Activated naive CD8-positive, alpha-beta T cell treated with anti-CD3 and anti-CD28 coated beads, Interleukin-2, amount 10 ng/mL, durations not matched to agents 7 days and 5 days (primary cell): ENCODE measurements at regions of chr4 and their contacts with region 1.

Region 1: DNA sequence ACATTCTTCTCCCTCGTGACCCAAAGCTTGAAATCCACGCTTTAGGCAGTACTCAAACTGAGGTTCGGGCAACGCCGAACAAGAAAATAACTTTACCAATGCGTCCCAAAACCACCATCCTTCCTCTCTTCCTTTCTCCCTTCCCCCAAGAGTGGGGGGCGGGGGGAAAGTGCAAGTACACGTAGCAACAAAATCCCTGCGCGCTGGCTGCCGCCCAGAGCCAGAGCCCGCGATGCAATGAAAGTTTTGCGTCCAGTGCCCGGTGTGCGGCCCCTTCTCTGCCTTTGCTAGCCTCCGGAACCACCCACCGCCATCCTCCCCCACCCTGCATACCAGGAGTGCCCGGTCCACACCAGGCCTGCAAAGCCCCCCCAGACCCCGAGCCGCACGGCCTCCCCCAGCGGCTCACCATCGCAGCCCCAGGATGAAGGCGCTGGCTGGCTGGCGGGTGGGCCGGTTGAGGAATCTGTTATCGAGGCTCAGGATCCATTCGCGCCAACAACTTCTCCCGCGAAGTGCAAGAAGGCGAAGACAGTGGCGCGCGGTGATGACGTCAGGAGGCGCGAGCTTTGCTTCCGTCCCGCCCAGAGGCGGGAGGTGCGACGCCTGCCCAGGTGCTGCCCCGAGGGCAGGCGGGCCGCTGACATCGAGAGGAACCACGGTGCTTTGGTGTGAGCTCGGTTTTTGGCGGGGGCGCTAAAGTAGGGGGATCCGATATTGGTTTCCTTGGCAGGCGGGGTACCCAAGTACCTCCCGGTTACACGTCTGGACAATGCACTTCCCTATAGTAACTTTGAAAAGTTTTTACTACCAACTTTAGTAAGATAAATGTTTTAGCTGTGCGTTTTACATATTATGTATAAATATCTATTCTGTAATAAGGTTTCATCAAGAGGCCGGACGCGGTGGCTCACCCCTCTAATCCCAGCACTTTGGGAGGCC is at the start of gene RFC1:
- DNase-seq: peak; percentile 97
- ATAC-seq: peak; percentile 90
- H3K4me3 Mint-ChIP-seq: peak within 1 kb of the TSS; percentile 92
- H3K27ac Mint-ChIP-seq: peak within 1 kb of the TSS; percentile 84
- H3K4me1 Mint-ChIP-seq: peaks cover 37% of the 10 kb centered on the region
- H3K27me3 Mint-ChIP-seq: no peaks in the 10 kb centered on the region
- total RNA-seq, gene RFC1: 74.6 to 84.5 TPM

Region 2: DNA sequence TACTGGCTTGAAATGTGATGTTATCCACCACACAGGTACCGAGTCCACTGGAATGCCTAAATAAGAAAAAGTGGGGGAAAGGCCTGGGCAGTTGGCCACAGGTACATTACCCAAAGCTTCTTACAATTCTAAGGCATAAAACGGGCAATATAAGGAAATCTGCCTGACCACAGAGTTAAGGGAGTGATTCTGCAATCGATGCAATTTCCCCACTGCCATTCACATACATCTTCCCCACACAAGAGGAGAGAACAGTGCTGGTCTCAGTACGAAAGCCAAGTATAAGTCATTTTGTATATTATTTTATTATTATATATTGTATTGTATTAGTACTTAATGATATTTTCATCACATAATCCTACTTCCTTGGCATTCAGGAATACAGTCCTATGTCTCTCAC is 30.5 kb before region 1 on chr4:
- POLR2A ChIA-PET with region 1: no interaction called
- DNase-seq: no peak
- ATAC-seq: no peak
- H3K4me3 Mint-ChIP-seq: no peak overlapping the region
- H3K27ac Mint-ChIP-seq: no peak overlapping the region
- H3K4me1 Mint-ChIP-seq: peaks cover 7% of the 10 kb centered on the region
- H3K27me3 Mint-ChIP-seq: no peaks in the 10 kb centered on the region

Region 3: DNA sequence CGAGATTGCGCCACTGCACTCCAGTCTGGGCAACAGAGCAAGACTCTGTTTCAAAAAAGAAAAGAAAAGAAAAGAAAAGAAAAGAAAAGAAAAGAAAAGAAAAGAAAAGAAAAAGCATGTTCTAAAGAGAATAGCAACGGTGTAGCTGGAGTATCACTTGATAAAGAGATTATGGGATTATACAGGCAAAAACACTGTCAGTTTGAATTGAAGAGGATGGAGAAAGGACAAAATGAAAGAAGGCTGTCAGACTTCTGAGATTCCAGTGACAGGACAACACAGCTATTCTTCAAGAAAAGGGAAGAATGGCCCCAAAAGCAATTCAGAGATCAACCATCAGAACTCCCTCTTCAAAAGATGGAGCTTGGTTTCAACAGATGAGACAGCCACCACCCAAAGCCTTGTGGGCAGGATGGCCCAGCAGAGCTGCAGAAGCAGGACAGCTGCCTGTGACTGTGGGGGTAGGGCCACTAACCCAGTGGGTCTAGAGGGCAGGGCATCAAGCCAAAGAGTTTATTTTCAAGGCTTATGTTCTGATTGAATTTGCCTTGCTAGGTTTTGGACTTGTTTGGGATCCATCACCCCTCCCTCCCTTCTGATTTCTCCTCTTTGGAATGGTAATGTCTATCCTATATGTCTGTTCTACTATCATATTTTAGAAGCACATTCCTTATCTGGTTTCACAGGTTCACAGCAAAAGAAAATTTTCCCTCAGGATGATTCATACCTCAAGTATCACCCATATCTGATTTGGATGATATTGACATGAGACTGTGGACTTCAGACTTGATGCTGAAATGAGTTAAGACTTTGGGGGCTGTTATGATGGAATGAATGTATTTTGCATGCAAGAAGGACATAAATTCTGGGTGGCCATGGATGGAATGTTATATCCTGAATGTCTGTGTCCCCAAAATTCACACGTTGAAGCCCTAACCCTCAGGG is 17.5 kb before region 1 on chr4:
- POLR2A ChIA-PET with region 1: interaction called, 42 read pairs
- DNase-seq: no peak
- ATAC-seq: no peak
- H3K4me3 Mint-ChIP-seq: peak overlapping the region; percentile 30
- H3K27ac Mint-ChIP-seq: peak overlapping the region; percentile 3
- H3K4me1 Mint-ChIP-seq: peaks cover 39% of the 10 kb centered on the region
- H3K27me3 Mint-ChIP-seq: no peaks in the 10 kb centered on the region

Region 4: GRCh38 chr4:39353478-39354253 is 12.4 kb before region 1 on chr4:
- POLR2A ChIA-PET with region 1: interaction called, 42 read pairs
- DNase-seq: no peak
- ATAC-seq: peak; percentile 84
- H3K4me3 Mint-ChIP-seq: peak overlapping the region; percentile 93
- H3K27ac Mint-ChIP-seq: peak overlapping the region; percentile 99
- H3K4me1 Mint-ChIP-seq: peaks cover 49% of the 10 kb centered on the region
- H3K27me3 Mint-ChIP-seq: no peaks in the 10 kb centered on the region

Region 5: DNA sequence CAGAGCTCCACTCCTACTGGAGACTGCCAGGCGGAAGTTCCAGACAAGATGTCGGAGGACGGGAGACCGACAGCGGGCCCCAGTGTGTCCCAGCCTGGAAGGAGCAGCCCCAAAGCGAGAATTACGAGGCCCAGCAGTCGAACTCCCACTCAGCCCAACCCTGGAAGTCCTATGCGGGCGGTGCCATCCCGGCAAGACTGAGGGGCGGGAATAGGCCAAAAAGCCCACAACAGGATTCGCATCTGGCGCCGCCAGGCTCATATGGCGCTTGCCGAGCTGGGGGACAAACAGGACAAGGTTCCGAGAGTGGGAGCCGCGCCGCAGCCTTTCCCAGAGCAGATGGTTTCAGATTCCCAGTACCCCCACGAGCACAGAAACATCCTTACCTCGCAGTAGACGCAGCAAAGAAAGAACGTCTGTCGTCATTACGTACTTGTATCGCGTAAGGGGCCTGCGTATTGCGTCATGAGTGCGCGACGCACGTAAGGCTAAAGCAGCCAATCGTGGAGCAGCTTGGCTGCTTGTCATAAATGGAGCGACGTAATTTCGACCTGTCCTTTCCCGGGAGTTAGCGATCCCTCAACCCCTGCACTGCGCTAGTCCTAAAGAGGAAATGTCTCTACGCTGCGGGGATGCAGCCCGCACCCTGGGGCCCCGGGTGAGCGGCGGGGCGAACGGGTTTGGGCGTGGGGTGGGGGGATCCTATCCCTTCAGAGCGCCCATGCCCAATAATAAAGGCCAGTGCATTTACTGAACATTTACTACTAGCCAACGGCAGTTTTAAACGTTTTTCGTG is 92.6 kb after region 1 on chr4 and contains the starts of genes LIAS and RPL9:
- POLR2A ChIA-PET with region 1: interaction called, 21 read pairs
- DNase-seq: peak; percentile 90
- ATAC-seq: peak; percentile 89
- H3K4me3 Mint-ChIP-seq: peak within 1 kb of the TSS; percentile 95
- H3K27ac Mint-ChIP-seq: peak within 1 kb of the TSS; percentile 97
- H3K4me1 Mint-ChIP-seq: peaks cover 41% of the 10 kb centered on the region
- H3K27me3 Mint-ChIP-seq: no peaks in the 10 kb centered on the region
- total RNA-seq, gene LIAS: 16.0 to 18.0 TPM
- total RNA-seq, gene RPL9: 1,040 to 1,200 TPM